Panc1 (cell line): ENCODE measurements at regions of chr21 and their contacts with region 1.

Region 1: DNA sequence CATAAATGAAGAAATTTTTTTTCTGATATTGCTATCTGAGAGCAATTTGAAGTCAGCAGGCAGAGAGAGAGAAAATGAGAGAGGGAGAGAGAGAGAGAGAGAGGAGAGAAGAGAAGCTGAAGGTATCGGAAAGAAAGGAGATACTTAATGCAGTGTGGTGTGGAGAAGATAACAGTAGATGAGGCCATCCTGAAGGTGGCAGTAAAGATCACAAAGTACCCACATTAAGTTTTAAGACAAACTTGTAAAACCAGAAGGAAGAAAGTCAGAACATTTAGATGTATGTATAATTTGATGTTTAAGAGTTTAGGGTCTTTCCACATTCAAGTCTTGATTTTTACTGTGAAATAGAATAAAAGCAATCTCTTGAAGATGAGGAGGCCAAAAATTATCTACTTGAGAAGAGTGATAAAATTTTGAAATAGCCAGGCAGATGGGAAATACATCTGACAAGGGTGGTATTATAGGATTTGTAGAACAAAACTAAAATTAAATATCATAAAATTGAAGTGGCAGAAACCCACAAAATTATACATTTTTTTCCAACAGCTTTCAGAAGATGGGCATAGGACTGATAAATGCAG is 1753.4 kb downstream of the MRPL39 start:
- DNase-seq: no peak
- ATAC-seq: no peak; the same call in 1 of the 2 replicates
- H3K4me3 ChIP-seq: no peak overlapping the region
- H3K27ac ChIP-seq: no peak overlapping the region
- H3K4me1 ChIP-seq: no peaks in the 10 kb centered on the region
- H3K27me3 ChIP-seq: no peaks in the 10 kb centered on the region
- CTCF ChIP-seq: peak; percentile 34; the same call in 1 of the 2 replicates

Region 2: GRCh38 chr21:23684431-23684830 is 169.5 kb before region 1 on chr21:
- CTCF ChIA-PET with region 1: no interaction called
- POLR2A ChIA-PET with region 1: no interaction called
- in situ Hi-C with region 1: no loop called
- intact Hi-C with region 1: no loop called
- DNase-seq: no peak
- ATAC-seq: no peak
- H3K4me3 ChIP-seq: no peak overlapping the region
- H3K27ac ChIP-seq: no peak overlapping the region
- H3K4me1 ChIP-seq: no peaks in the 10 kb centered on the region
- H3K27me3 ChIP-seq: no peaks in the 10 kb centered on the region
- CTCF ChIP-seq: no peak

Region 3: GRCh38 chr21:23968722-23969647 is 115.1 kb after region 1 on chr21:
- CTCF ChIA-PET with region 1: no interaction called
- POLR2A ChIA-PET with region 1: no interaction called
- in situ Hi-C with region 1: no loop called
- intact Hi-C with region 1: loop called (anchors 5 kb)
- DNase-seq: peak; percentile 57
- ATAC-seq: peak; percentile 91
- H3K4me3 ChIP-seq: peak overlapping the region in 1 of 2 experiments; percentile 6; a peak in 1 of 4 replicates
- H3K27ac ChIP-seq: no peak overlapping the region
- H3K4me1 ChIP-seq: no peaks in the 10 kb centered on the region
- H3K27me3 ChIP-seq: no peaks in the 10 kb centered on the region
- CTCF ChIP-seq: peak; percentile 72

Region 4: DNA sequence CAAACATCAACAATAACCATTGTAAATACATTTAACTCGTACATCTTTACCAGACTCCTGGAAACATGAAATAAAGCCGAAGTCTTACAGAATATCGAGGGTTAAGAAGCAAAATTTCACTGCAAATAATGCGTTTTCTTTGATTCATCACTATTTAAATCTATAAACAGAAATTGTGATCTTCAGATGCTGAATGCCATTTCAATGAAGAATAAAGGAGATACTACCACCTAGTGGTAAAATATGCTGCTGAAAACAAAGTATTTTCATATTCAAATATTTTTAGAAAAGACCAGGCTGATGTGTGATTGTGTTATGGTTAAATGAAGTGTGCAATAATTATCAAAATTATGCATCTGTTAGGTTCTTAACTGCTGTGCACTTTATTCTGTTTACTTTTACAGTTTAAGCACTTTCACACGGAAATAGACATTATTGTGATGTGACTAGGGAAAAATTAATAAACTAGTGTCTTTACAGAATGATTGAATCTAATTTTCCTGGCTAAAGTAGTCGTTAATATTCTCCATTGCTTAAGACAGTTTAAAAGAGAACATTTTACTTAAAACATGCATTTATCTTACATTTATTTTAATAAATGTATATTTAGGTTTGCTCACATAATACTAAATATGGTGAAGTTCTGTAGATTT is 660.3 kb after region 1 on chr21:
- CTCF ChIA-PET with region 1: no interaction called
- POLR2A ChIA-PET with region 1: no interaction called
- in situ Hi-C with region 1: no loop called
- intact Hi-C with region 1: loop called (anchors 5 kb)
- DNase-seq: peak; percentile 1
- ATAC-seq: no peak
- H3K4me3 ChIP-seq: no peak overlapping the region
- H3K27ac ChIP-seq: no peak overlapping the region
- H3K4me1 ChIP-seq: no peaks in the 10 kb centered on the region
- H3K27me3 ChIP-seq: no peaks in the 10 kb centered on the region
- CTCF ChIP-seq: peak; percentile 51; the same call in 1 of the 2 replicates